ENCODE measurements at regions of chr18 and their contacts with region 1.

Region 1: DNA sequence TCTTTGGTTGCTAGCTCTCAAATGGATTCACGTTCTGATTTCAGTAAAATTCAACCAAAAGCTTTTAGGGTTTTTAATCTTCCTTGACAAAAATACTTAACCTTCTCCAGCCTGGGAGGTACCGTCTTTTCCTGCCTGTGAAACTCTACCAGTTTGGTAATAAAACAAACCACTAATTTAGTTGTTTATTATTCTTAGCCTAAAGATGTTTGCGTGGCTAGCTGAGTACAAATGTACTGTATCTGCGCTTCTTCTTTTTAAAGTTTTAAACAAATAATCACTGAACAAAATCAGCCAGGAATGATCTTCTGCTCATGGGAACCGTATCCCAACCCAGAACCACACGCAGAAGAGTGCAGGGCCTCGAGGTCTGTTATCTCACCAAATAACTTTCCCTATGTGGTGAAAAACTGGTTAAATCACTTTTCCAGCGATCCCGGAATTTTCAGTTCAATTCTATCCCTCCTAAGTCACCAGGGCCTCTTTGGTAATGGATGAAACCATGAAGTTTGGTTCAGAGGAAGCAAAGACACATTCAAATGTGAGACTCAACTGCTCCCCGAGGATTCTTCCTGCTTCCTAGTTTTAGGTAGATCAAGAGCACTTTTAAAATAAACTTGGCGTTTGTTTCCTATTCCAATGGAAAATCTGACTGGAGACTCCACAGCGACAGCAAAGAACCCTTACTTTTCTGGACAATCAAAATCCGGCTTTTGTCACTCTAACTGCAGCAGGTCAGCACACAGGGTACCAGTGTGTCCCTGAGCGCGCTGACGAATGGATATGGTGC is 36.1 kb downstream of the BCL2 start:
- DNase-seq: no peak
- ATAC-seq: no peak
- H3K4me3 ChIP-seq: no peak overlapping the region
- H3K4me3 Mint-ChIP-seq: no peak overlapping the region
- H3K27ac ChIP-seq: no peak overlapping the region
- H3K27ac Mint-ChIP-seq: no peak overlapping the region
- H3K4me1 ChIP-seq: peaks cover 56% of the 10 kb centered on the region
- H3K4me1 Mint-ChIP-seq: peaks cover 41% of the 10 kb centered on the region
- H3K27me3 ChIP-seq: no peaks in the 10 kb centered on the region
- H3K27me3 Mint-ChIP-seq: no peaks in the 10 kb centered on the region
- CTCF ChIP-seq: no peak

Region 2: DNA sequence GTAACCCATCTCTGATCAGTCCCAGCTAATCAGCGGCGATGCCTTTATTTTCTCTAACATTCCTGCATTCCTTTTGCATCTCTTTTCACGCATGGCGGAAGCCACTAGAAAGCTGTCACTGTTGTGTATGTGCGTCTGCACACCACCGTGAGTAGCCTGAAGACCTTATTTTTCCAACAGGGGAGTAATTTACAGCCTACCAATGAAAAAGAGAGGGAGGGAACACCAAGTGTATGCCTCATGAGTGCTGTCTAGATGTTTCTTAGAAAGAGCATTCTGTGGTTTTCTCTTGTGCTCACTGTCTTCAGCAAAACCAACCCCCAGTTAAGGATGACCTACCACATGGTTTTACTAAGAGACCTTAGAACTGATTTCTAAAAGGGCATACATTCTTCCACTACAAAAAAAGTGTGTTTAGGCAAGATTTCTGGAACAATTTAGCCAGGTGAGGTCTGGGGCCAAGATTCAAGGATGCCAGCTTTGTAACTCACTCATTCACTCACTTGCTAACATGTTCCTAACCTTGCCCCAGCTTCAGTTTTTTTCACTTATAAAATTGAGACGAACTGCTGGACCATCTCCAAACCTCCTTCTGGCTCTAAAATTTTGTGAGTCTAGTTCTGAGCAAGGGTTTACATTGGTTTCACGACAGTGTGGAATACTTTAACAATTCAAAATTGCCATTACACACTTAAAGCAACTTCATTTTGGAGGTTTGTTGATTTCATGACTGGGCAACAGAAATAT is 15.4 kb before region 1 on chr18:
- CTCF ChIA-PET with region 1: interaction called, 4 read pairs
- POLR2A ChIA-PET with region 1: interaction called, 3 read pairs
- intact Hi-C with region 1: loop called in 1 of 2 experiments (anchors 2 kb)
- DNase-seq: peak in 1 of 9 experiments; percentile 22
- ATAC-seq: peak; percentile 78
- H3K4me3 ChIP-seq: no peak overlapping the region
- H3K4me3 Mint-ChIP-seq: peak overlapping the region; percentile 47
- H3K27ac ChIP-seq: peak overlapping the region in 1 of 2 experiments; percentile 22
- H3K27ac Mint-ChIP-seq: peak overlapping the region; percentile 83
- H3K4me1 ChIP-seq: peaks cover 56% of the 10 kb centered on the region
- H3K4me1 Mint-ChIP-seq: peaks cover 71% of the 10 kb centered on the region
- H3K27me3 ChIP-seq: no peaks in the 10 kb centered on the region
- H3K27me3 Mint-ChIP-seq: no peaks in the 10 kb centered on the region
- CTCF ChIP-seq: no peak

Region 3: GRCh38 chr18:63299837-63300745 is 16.6 kb after region 1 on chr18:
- CTCF ChIA-PET with region 1: interaction called, 4 read pairs
- POLR2A ChIA-PET with region 1: interaction called, 11 read pairs
- intact Hi-C with region 1: loop called in 1 of 2 experiments (anchors 2 kb)
- DNase-seq: peak in 3 of 9 experiments; percentile 38 to 60 (median 39)
- ATAC-seq: peak; percentile 59
- H3K4me3 ChIP-seq: no peak overlapping the region
- H3K4me3 Mint-ChIP-seq: peak overlapping the region; percentile 43
- H3K27ac ChIP-seq: peak overlapping the region; percentile 4 to 67
- H3K27ac Mint-ChIP-seq: peak overlapping the region; percentile 86
- H3K4me1 ChIP-seq: peaks cover 71% of the 10 kb centered on the region
- H3K4me1 Mint-ChIP-seq: peaks cover 75% of the 10 kb centered on the region
- H3K27me3 ChIP-seq: no peaks in the 10 kb centered on the region
- H3K27me3 Mint-ChIP-seq: no peaks in the 10 kb centered on the region
- CTCF ChIP-seq: no peak

Region 4: GRCh38 chr18:64276311-64277090 is 993.0 kb after region 1 on chr18:
- CTCF ChIA-PET with region 1: no interaction called
- POLR2A ChIA-PET with region 1: no interaction called
- intact Hi-C with region 1: no loop called
- DNase-seq: no peak
- ATAC-seq: no peak
- H3K4me3 ChIP-seq: no peak overlapping the region
- H3K4me3 Mint-ChIP-seq: no peak overlapping the region
- H3K27ac ChIP-seq: no peak overlapping the region
- H3K27ac Mint-ChIP-seq: no peak overlapping the region
- H3K4me1 ChIP-seq: no peaks in the 10 kb centered on the region
- H3K4me1 Mint-ChIP-seq: no peaks in the 10 kb centered on the region
- H3K27me3 ChIP-seq: no peaks in the 10 kb centered on the region
- H3K27me3 Mint-ChIP-seq: no peaks in the 10 kb centered on the region
- CTCF ChIP-seq: no peak